Mucosa of descending colon (tissue), 3 donors: ENCODE measurements at regions of chr20 and their contacts with region 1.

Region 1: GRCh38 chr20:63178889-63179686 is 36.8 kb downstream of the YTHDF1 start:
- DNase-seq: peak in 2 of 3 donors; percentile 35 to 57
- ATAC-seq: peak; percentile 46
- H3K4me3 ChIP-seq: no peak overlapping the region
- H3K4me1 ChIP-seq: peaks cover 14% of the 10 kb centered on the region
- CTCF ChIP-seq: no peak

Region 2: DNA sequence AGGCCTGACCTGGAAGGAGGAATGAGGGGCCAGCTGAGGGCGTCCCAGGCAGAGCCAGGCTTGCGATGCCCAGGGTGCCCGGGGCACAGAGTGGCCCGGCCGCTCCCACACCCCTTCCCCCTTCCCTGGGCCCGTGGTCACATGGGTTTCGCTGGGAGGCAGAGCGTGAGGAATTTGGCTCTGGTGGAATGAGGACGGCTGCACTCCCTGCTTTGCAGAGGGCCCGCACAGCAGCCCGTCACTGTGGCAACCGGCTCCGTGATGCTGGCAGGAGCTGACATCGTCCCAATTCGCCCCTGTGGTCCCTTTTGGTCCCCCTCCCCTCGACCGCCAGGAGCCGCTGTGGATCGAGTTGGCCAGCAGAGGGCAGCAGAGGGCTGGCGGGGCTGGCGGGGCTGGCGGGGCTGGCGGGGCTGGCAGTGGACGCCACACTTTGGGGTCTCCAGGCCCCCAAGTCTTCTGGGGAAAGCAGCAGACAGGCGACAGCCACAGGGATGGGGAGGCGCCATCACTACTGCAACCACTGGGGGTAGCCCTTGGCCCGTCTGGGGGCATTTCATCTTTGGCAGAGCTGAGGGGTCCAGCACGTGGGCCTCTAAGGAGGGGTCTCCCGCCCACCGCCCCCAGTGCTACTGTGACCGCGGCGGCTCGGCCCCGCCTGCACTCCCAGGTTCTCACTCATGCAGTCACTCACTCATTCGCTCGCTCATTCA is 122.7 kb before region 1 on chr20:
- intact Hi-C with region 1: loop called in 1 of 2 experiments (anchors 10 kb)
- DNase-seq: peak in 2 of 3 donors; percentile 33 to 46
- ATAC-seq: peak; percentile 68
- H3K4me3 ChIP-seq: no peak overlapping the region
- H3K4me1 ChIP-seq: no peaks in the 10 kb centered on the region
- CTCF ChIP-seq: peak; percentile 82

Region 3: DNA sequence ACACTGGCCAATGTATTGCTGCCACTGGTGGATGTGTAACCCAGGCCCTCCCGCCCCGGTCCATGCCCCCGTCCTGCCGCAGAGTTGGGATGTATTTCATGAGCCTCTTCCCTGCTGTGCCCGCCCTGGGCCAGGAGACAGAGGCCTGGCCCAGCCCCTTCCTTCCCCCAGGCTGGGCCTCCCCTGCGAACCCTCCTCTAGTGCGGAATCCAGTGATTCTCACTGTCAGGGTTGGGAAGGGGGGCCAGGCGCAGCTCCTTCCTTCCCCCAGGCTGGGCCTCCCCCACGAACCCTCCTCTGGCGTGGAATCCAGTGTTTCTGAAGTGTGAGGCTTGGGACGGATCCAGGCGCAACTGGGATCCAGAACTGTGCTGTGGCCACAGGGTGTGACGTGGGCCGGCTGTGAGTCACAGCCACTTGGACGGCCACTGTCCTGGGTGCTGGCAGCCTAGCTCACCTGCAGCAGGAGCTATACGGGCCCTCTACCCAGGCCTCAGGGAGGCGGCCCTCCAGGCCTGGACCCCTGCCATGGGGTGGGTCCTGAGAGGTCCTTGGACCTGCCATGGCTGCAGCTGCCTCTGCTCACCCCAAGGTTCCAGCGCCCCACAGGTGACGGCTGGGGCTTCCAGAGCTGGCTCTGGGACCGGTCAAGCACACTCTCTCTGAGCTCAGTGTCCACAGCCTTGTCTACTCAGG is 142.2 kb after region 1 on chr20:
- intact Hi-C with region 1: no loop called
- DNase-seq: peak in 2 of 3 donors; percentile 21 to 44
- ATAC-seq: no peak
- H3K4me3 ChIP-seq: no peak overlapping the region
- H3K4me1 ChIP-seq: no peaks in the 10 kb centered on the region
- CTCF ChIP-seq: no peak